HEK293T (cell line): ENCODE measurements at regions of chr15 and their contacts with region 1.

Region 1: GRCh38 chr15:90249203-90249863 is at the start of gene TTLL13:
- DNase-seq: peak; percentile 96

Region 2: DNA sequence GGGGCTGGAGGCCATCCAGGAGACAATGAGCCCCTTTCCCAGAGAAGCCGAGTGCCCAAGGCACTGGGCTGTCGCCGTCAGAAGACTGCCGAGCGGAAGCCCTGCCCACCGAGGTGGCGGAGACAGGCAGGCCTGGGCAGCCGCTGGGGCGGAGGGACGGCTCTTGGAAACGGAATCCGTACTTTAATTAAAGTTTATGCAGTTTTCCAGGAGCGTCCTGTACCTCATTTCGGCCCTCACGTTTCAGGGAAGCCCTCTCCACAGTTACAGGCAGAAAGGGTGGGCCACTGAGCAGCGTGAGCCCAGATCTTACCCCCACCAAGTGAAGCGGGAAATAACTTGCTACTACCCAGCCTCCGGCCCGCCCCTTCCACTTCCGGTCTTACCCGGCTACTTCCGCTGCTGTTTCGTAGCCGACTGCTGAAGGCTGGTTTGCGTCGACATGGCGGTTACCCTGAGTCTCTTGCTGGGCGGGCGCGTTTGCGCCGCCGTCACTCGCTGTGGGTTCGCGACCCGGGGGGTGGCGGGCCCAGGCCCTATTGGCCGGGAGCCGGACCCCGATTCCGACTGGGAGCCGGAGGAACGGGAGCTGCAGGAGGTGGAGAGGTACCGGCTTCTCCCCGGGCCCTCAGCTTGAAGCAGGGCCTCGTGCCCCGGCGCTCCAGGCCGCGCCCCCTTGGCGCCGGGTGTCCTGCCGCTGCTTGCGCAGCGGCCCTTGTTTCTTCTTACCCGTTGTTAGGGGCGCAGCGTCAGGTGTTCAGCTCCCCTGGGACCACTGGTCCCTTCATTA is 16.1 kb after region 1 on chr15 and contains the start of gene NGRN:
- CTCF ChIA-PET with region 1: interaction called, 5 read pairs
- POLR2A ChIA-PET with region 1: interaction called, 32 read pairs
- DNase-seq: peak; percentile 92